Lower leg skin (tissue), 4 donors: ENCODE measurements at regions of chr11 and their contacts with region 1.

Region 1: DNA sequence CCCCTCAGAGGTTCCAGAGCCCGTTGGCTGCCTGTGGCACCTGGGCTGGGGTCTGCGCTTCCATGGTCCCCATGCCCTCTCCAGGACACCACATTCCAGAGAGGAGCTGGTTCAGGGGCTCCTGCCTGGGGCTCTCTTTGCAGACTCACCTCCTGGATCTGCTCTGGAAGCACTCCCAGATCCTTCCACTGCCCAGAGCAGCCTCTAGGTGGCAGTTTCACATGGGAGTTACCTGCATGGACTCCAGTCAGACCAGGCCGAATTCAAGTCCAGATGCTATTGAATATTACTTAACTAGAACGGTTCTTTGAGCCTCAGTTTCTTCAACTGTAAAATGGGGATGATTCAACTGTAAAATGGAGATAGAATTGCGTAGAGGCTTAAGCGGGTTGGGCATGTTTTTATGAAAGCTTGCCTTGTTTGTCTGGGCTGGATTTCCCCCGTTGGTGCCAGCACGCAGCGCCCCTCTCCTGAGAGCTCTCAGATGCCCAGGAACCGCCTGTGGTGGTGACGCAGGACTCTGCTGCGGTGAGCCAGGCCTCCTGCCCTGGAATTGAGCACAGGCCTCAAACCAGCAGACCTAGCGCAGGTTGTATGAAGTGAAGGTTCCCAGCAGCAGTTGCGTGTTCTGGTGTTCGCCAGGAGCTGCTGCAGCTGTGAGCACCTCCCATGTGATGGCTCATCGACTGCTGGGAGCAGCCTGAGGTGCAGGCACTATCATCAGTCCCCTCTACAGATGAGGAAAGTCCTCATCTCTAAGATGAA is 44.2 kb downstream of the LMO1 start:
- DNase-seq: no peak
- H3K4me3 ChIP-seq: no peak overlapping the region
- CTCF ChIP-seq: no peak
- POLR2A ChIP-seq: no peak

Region 2: DNA sequence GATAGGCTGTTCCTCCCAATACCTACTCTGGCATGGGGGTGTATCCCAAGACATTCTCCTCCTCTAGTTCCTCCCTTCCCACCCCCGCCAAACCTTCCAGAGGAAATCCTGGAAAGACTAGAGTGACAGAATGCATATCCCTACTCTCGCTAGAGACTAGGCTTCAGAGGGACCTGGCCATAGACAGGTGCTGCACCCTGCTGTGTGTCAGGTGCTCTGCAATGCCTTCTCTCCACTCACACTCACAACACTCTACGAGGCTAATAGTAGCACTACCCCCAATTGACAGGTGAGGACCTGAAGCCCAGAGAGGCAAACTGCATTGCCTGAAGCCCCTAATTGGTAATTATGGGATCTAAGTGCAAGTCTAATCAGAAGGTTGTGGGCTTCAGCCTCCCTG is 90.4 kb after region 1 on chr11:
- intact Hi-C with region 1: loop called (anchors 5 kb)
- DNase-seq: no peak
- H3K4me3 ChIP-seq: no peak overlapping the region
- CTCF ChIP-seq: no peak
- POLR2A ChIP-seq: no peak